ENCODE measurements at regions of chr19 and their contacts with region 1.

Region 1: GRCh38 chr19:43555185-43555770 is 20.0 kb downstream of the XRCC1 start:
- DNase-seq: peak; percentile 17
- H3K4me3 ChIP-seq: no peak overlapping the region
- CTCF ChIP-seq: peak; percentile 91

Region 2: DNA sequence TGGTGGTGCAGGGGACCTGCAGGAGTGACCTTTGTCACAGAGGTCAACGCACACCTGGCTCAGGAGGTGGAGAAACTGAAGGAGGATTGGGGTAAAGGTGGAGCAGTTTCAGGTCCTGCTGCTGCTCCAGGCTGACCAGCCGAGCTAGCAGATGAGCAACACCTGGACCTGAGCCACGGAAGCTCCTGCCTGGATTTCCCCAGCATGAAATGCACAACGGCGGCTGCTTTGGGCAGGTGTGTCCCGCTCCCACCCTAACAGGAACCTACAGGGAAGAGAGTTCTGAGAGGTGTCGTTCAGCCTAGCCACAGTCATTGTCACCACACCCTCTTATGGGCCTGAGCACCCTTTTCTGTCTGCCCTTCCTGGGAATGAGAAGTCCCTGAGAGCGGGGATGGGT is 217.5 kb before region 1 on chr19:
- CTCF ChIA-PET with region 1: no interaction called
- POLR2A ChIA-PET with region 1: no interaction called
- DNase-seq: no peak
- H3K4me3 ChIP-seq: no peak overlapping the region
- CTCF ChIP-seq: no peak

Region 3: GRCh38 chr19:43408043-43408442 is 147.2 kb before region 1 on chr19:
- CTCF ChIA-PET with region 1: no interaction called
- POLR2A ChIA-PET with region 1: no interaction called
- DNase-seq: no peak
- H3K4me3 ChIP-seq: no peak overlapping the region
- CTCF ChIP-seq: no peak

Region 4: GRCh38 chr19:43526884-43527859 is 28.1 kb before region 1 on chr19 and contains the start of gene ETHE1:
- CTCF ChIA-PET with region 1: interaction called, 208 read pairs
- POLR2A ChIA-PET with region 1: no interaction called
- DNase-seq: no peak
- H3K4me3 ChIP-seq: peak within 1 kb of the TSS; percentile 85
- CTCF ChIP-seq: no peak

Region 5: GRCh38 chr19:43570174-43570791 is 15.0 kb after region 1 on chr19:
- CTCF ChIA-PET with region 1: interaction called, 45 read pairs
- POLR2A ChIA-PET with region 1: no interaction called
- DNase-seq: no peak
- H3K4me3 ChIP-seq: no peak overlapping the region
- CTCF ChIP-seq: no peak

Region 6: DNA sequence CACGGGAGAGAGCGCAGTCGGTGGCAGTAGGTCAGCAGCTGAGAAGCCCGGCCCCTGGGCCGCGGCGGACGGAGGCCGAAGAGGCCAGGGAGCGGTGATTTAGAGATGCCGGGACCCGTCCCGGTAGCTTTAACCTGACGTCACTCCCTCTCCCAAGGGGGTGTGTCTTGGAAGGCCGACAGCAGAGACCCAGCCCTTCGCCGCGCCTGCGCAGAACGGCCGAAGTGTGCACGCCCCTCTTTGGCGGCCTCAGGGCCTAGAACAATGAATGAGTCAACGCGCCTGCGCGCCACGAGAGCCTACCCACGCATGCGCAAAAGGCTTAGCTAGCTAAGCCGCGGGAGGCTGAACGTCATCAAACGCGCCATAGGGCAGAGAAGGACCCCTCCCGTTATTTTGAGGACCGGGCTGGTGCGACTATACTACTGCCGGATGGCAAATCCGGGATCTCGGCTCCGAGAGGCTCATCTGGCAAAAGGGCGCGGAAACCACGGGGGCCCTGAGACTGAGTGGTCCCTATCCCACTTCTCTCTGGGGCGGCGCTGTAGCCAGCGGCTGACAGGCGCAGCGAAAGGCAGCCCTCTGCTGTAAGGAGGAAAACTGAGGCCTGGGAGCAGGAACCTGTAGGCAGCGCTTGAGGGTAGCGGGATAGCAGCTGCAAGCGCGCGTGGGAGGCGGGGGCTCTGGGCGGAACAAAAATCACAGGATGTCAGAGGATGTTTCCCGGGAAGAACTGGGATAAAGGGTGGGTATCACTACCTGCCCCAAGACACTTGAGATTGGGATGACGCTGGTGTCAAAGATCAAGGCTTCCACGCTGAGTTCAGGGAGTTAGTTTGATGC is 40.9 kb after region 1 on chr19 and contains the starts of genes IRGQ and ZNF576:
- CTCF ChIA-PET with region 1: interaction called, 42 read pairs
- POLR2A ChIA-PET with region 1: interaction called, 4 read pairs
- DNase-seq: peak; percentile 90
- H3K4me3 ChIP-seq: peak within 1 kb of the TSS; percentile 79
- CTCF ChIP-seq: no peak

Region 7: DNA sequence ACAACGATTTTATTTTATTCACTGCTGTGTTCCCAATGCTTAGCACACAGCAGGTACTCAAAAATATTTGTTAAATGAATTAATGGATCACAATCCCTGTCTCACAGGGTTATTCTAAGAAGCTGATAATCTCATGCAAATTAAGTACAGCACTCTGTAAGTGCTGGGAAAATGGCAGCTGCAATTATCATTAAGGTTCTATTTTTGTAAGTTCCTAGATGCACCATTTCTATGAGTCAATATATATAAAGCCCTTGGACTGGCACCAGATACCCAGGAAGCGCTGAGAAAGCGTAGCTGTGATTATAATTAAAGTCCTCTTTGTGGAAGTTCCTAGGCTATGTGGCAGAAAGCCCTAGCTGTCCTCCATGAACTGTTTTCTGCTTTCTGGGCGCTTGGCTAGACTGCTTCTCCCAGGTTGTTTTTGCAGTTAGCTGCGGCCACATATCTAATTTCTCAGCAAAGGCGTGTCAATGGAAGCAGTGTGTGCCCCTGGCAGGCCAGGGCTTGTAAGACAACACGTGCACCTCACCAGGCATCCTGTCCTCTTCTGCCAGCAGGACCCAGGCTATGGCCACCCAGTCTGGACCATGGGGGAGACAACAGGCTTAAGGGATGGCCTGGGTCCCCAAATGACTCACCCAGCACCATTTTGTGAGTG is 51.4 kb after region 1 on chr19:
- CTCF ChIA-PET with region 1: no interaction called
- POLR2A ChIA-PET with region 1: no interaction called
- DNase-seq: no peak
- H3K4me3 ChIP-seq: no peak overlapping the region
- CTCF ChIP-seq: no peak

Region 8: DNA sequence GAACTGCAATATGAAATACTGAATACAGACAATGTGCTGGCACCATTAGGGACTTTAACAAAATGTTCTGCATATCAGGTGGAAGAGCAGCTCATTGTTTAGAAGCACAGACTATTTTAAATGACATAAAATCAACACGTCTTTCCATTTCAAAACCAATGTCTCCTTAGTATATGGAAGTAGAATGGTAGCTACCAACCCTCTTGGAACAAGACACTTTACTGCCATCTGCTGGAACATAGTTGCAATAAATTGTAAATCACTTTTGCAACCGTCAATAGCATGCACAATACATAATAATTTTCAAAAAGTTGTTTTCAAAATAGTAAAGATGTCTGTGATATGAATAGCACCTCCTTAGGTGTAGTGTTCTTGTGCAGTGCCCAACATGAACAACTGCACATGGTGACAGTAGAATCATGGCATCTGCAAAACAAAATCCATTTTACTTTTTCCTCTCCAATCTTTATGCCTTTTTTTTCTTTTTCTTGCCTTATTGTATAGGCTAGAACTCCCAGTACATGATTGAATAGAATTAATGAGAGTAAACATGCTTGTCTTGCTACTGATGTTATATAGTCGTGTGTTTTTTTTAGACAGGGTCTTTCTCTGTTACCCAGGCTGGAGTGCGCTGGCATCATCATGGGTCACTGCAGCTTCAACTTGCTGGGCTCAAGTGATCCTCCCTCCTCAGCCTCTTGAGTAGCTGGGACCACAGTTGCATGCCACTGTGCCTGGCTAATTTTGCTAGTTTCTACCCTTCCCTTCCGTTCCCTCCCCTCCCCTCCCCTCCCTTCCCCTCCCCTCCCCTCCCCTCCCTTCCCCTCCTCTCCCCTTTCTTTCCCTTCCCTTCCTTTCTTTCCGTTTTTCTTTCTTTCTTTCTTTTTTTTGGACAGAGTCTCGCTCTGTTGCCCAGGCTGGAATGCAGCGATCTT is 254.8 kb after region 1 on chr19:
- CTCF ChIA-PET with region 1: interaction called, 27 read pairs
- POLR2A ChIA-PET with region 1: no interaction called
- DNase-seq: peak; percentile 17
- H3K4me3 ChIP-seq: no peak overlapping the region
- CTCF ChIP-seq: peak; percentile 52

Measured in AG04449 (cell line).